Mammary epithelial cell (primary cell): ENCODE measurements at regions of chr10 and their contacts with region 1.

Region 1: DNA sequence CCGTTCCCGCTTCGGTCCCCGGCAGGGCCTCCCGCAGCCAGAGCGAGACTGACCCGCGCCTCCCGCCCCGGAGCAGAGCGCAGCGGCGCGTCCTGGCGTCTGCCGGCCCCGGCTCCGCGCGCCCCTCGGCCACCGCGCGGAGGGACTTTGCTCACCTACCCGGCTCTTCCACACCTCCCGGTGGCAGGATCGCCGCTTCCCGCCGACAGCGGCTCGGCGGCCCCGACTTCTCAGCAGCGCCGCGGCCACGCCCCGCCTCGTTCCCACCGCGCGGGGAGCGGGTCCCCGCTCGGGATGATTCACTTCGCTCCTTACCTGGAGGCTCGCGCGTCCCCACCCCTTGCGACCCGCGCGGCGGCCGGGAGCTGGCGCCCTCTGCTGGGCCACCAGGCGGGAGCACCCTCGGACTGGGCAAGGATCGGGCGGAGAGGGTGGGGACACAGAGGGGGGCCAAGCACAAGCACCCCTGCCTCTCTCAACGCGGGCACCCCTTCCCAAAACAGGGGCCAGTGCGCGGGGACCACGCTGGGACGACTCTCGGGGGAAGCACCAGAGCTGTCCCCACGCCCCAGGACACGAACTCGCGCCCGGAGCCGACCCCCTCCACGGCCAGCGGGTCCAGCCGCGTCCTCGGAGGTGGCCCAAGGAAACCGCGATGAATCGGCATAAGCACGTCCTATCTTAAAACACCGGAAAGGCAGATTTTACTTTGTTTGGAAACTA is 101.0 kb upstream of the SVIL start:
- DNase-seq: peak; percentile 91
- H3K4me3 ChIP-seq: peak overlapping the region; percentile 72 to 89 (median 79)
- H3K27ac ChIP-seq: peak overlapping the region; percentile 78
- H3K4me1 ChIP-seq: peaks cover 18% of the 10 kb centered on the region
- H3K27me3 ChIP-seq: no peaks in the 10 kb centered on the region
- CTCF ChIP-seq: peak; percentile 46 to 95

Region 2: DNA sequence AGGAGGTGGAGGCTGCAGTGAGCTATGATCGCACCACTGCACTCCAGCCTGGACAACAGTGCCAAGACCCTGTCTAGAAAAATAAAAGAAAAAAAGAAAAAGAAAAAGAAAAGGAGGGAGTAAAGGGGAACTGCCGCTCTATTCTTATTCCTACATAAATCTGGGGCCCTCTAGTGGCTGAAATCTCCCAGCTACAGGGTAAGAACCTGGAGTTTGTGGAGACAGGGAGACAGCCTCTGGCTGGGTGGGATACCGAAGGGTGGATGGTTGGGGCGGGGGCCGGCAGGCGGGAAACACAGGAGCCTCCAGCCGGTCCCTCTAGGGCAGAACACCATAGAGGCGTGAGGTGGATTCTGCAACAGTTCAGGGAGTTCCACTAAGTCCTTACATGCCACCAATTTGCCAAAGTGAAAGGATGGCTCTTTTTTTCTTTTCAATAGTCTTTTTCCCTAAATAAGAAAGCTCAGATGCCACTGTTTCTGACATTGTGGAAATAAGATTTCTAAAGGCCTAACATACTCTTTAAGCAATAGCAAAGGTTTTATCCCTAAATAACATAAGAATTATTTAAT is 218.3 kb before region 1 on chr10:
- CTCF ChIA-PET with region 1: no interaction called
- dilution Hi-C with region 1: no loop called
- in situ Hi-C with region 1: no loop called
- intact Hi-C with region 1: loop called (anchors 5 kb)
- DNase-seq: no peak
- H3K4me3 ChIP-seq: no peak overlapping the region
- H3K27ac ChIP-seq: no peak overlapping the region
- H3K4me1 ChIP-seq: peaks cover 4% of the 10 kb centered on the region
- H3K27me3 ChIP-seq: no peaks in the 10 kb centered on the region
- CTCF ChIP-seq: peak; percentile 52 to 54

Region 3: DNA sequence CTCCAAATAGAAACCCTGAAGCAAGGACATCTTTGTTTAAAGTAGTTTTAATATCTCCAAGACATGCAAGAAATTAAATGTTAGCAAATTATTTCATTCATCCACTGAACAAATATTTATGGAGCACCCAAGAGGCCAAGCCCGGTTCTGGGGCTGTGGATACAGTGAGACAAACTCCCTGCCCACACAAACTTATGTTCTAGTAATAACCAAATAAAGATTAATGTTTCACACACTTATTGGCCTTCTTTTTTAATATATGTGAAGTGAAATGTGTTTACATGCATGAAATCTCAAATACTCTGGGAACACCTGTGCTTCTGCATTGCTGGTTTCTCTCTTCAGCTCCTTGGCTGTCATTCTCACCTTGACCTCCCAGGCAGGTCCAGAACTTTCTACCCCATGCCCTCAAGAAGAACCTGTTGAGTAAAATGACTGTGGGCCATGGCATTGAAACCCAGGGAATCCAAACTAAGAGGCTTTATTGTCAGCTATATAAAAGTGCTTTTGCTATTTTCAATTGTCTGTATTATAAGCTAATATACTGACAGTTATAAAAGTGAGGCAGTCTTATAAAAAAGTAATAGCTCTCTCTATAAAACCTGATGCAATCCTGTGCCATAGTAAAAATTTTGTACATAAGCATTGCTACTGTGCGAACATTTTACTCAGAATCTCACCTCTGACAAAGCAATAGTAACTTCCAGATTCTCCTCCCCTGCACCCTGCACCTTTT is 144.7 kb before region 1 on chr10:
- CTCF ChIA-PET with region 1: no interaction called
- dilution Hi-C with region 1: no loop called
- in situ Hi-C with region 1: loop called in 1 of 2 experiments (anchors 10 kb)
- intact Hi-C with region 1: loop called (anchors 1 kb)
- DNase-seq: no peak
- H3K4me3 ChIP-seq: no peak overlapping the region
- H3K27ac ChIP-seq: peak overlapping the region; percentile 100
- H3K4me1 ChIP-seq: peaks cover 36% of the 10 kb centered on the region
- H3K27me3 ChIP-seq: no peaks in the 10 kb centered on the region
- CTCF ChIP-seq: no peak

Region 4: GRCh38 chr10:29635711-29636144 is 100.0 kb before region 1 on chr10:
- CTCF ChIA-PET with region 1: no interaction called
- dilution Hi-C with region 1: no loop called
- in situ Hi-C with region 1: no loop called
- intact Hi-C with region 1: loop called (anchors 10 kb)
- DNase-seq: peak; percentile 36
- H3K4me3 ChIP-seq: no peak overlapping the region
- H3K27ac ChIP-seq: peak overlapping the region; percentile 96
- H3K4me1 ChIP-seq: peaks cover 38% of the 10 kb centered on the region
- H3K27me3 ChIP-seq: no peaks in the 10 kb centered on the region
- CTCF ChIP-seq: no peak

Region 5: GRCh38 chr10:29784175-29784773 is 48.5 kb after region 1 on chr10:
- CTCF ChIA-PET with region 1: no interaction called
- dilution Hi-C with region 1: no loop called
- in situ Hi-C with region 1: no loop called
- intact Hi-C with region 1: loop called (anchors 1 kb)
- DNase-seq: peak; percentile 100
- H3K4me3 ChIP-seq: no peak overlapping the region
- H3K27ac ChIP-seq: peak overlapping the region; percentile 91
- H3K4me1 ChIP-seq: peaks cover 15% of the 10 kb centered on the region
- H3K27me3 ChIP-seq: no peaks in the 10 kb centered on the region
- CTCF ChIP-seq: no peak

Region 6: GRCh38 chr10:29857843-29858701 is 122.3 kb after region 1 on chr10:
- CTCF ChIA-PET with region 1: no interaction called
- dilution Hi-C with region 1: no loop called
- in situ Hi-C with region 1: loop called in 1 of 2 experiments (anchors 5 kb)
- intact Hi-C with region 1: loop called (anchors 1 kb)
- DNase-seq: peak; percentile 84
- H3K4me3 ChIP-seq: no peak overlapping the region
- H3K27ac ChIP-seq: no peak overlapping the region
- H3K4me1 ChIP-seq: peaks cover 40% of the 10 kb centered on the region
- H3K27me3 ChIP-seq: no peaks in the 10 kb centered on the region
- CTCF ChIP-seq: peak; percentile 74 to 91

Region 7: DNA sequence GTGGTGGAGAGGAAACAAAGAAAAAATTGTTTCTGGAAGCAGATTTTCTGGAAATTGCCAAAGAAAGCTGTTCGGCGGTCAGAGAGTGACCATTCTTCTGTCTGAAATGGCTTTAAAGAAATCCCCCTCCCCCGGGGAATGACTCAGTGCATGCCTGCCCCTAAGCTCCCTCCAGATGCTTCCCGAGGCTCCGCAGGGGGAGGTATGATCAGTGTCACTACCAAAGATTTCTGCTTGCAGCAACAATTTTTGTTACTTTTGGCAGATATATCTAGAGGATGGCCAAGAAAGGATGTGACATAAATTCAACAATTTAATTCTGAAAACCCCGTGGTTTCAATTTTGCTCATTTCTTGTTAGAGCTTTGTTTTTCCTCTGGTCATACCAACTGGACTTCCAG is 159.7 kb after region 1 on chr10:
- CTCF ChIA-PET with region 1: no interaction called
- dilution Hi-C with region 1: no loop called
- in situ Hi-C with region 1: no loop called
- intact Hi-C with region 1: no loop called
- DNase-seq: peak; percentile 57
- H3K4me3 ChIP-seq: no peak overlapping the region
- H3K27ac ChIP-seq: no peak overlapping the region
- H3K4me1 ChIP-seq: peaks cover 7% of the 10 kb centered on the region
- H3K27me3 ChIP-seq: no peaks in the 10 kb centered on the region
- CTCF ChIP-seq: no peak

Region 8: DNA sequence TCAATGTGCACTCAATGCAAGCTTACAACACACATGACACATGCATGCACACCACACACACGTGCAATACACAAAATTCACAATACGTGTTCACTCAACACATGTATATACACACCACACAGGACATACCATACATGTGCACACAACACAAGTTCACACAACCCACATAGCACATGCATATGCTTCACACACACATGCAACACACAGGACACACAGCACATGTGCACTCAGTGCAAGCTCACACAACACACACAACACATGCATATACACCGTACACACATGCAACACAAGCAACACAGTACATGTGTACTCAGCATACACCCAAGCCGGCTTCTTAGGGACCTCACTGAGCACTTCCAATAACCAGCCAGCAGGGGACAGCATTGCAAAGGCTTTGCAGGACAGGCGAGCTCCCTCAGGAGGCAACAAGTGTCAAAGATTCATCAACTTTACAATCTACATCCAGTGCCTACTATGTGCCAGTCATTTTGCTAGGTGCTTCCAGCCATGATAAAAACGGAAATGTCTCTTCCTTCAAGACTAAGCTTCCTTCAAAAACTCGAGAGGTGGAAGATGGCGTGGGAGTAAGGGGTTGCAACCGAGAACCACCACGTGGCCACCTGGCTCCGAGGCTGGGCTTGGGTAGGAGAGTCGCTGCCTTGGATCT is 262.5 kb after region 1 on chr10:
- CTCF ChIA-PET with region 1: no interaction called
- dilution Hi-C with region 1: no loop called
- in situ Hi-C with region 1: no loop called
- intact Hi-C with region 1: loop called (anchors 1 kb)
- DNase-seq: peak; percentile 68
- H3K4me3 ChIP-seq: no peak overlapping the region
- H3K27ac ChIP-seq: no peak overlapping the region
- H3K4me1 ChIP-seq: no peaks in the 10 kb centered on the region
- H3K27me3 ChIP-seq: no peaks in the 10 kb centered on the region
- CTCF ChIP-seq: peak; percentile 100